ENCODE measurements at regions of chr7 and their contacts with region 1.

Region 1: GRCh38 chr7:129423700-129424618 is 10.3 kb upstream of the STRIP2 start:
- DNase-seq: peak; percentile 34
- H3K4me3 Mint-ChIP-seq: no peak overlapping the region
- H3K27ac Mint-ChIP-seq: no peak overlapping the region
- H3K4me1 Mint-ChIP-seq: peaks cover 11% of the 10 kb centered on the region
- H3K27me3 Mint-ChIP-seq: no peaks in the 10 kb centered on the region
- CTCF ChIP-seq: no peak

Region 2: GRCh38 chr7:129433847-129434674 is 10.1 kb after region 1 on chr7 and contains the start of gene STRIP2:
- CTCF ChIA-PET with region 1: interaction called, 5 read pairs
- POLR2A ChIA-PET with region 1: interaction called, 13 read pairs
- intact Hi-C with region 1: no loop called
- DNase-seq: peak; percentile 84
- H3K4me3 Mint-ChIP-seq: peak within 1 kb of the TSS; percentile 96
- H3K27ac Mint-ChIP-seq: peak within 1 kb of the TSS; percentile 29
- H3K4me1 Mint-ChIP-seq: peaks cover 20% of the 10 kb centered on the region
- H3K27me3 Mint-ChIP-seq: no peaks in the 10 kb centered on the region
- CTCF ChIP-seq: peak; percentile 8
- total RNA-seq, gene STRIP2: 6.3 and 18.3 TPM in 2 replicates

Measured in MCF 10A (cell line).